ENCODE measurements at regions of chr10 and their contacts with region 1.

Region 1: DNA sequence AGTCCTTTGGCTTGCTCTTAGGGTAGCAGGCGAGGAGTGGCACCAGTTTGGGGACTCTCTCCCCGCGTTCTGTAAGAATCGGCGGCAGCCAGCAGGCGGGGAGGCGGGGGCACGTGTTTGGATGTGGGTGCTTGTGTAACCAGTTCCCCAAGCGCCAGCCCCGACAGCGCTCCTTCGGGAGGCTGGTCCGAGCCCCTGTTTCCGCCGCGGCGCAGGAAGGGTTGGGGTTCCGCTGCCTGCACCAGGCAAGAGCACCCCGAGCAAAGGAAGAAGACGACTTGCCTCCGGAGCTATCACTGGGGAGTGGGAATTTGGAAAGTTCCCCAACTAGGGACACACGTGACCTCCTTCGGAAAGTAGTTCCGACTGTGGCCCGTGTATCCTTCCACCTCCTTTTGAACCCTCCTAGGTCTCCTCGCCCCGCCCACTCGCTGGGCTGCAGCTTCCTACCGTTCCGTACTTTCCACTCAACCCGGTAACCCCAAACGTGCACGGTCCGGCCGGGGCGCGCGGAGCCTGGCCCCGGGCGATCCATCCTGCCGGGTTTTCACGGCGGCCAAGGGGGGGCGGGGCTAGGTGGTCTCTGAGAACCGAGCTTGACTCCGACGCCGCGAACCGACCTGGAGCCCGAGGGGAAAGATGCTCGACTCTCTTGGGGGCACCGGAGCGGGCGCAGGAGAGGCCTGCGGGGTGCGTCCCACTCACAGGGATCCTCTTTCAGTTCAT is 1.2 kb downstream of the KLLN start:
- DNase-seq: peak; percentile 93
- H3K4me3 Mint-ChIP-seq: peak overlapping the region; percentile 92
- H3K27ac Mint-ChIP-seq: peak overlapping the region; percentile 76
- H3K4me1 Mint-ChIP-seq: peaks cover 17% of the 10 kb centered on the region
- H3K27me3 Mint-ChIP-seq: no peaks in the 10 kb centered on the region
- CTCF ChIP-seq: no peak

Region 2: DNA sequence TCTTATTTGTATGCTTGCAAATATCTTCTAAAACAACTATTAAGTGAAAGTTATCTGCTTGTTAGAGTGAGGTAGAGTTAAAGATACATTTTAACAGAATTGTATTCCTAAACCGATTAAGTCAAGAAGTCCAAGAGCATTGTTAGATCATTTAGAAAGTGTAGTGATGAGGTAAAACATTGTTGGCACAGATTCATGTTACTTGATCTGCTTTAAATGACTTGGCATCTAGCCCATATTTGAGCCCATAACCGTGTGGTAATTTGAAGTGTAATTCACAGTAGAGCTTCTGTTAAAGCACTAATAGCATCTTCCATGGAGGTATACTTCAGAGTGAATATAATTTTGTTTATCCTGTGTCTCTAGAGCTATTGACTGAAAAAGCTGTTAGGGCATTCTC is 63.5 kb after region 1 on chr10:
- CTCF ChIA-PET with region 1: no interaction called
- intact Hi-C with region 1: loop called (anchors 5 kb)
- DNase-seq: peak; percentile 1
- H3K4me3 Mint-ChIP-seq: no peak overlapping the region
- H3K27ac Mint-ChIP-seq: no peak overlapping the region
- H3K4me1 Mint-ChIP-seq: peaks cover 17% of the 10 kb centered on the region
- H3K27me3 Mint-ChIP-seq: no peaks in the 10 kb centered on the region
- CTCF ChIP-seq: no peak

Region 3: DNA sequence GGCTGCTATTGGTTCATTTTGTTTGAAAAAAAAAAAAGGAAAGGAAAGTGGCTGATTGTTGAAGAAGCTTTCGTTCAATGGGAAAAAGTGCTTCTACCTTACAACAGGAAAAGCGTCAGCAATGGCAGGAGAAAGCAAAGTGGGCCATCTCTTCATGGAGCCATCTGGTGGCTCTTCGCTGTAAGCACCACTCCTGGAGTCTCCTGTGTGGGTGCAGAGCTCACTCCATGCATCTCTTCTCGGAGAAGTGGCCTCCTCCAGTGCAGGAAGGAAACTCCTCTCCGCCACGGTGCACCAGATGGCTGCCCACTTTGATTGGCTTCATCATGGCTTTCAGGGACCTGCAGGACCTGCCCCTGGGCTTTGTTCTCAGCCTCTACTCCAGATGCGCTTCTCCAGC is 252.3 kb after region 1 on chr10:
- CTCF ChIA-PET with region 1: interaction called, 6 read pairs
- intact Hi-C with region 1: loop called (anchors 5 kb)
- DNase-seq: peak; percentile 32
- H3K4me3 Mint-ChIP-seq: no peak overlapping the region
- H3K27ac Mint-ChIP-seq: no peak overlapping the region
- H3K4me1 Mint-ChIP-seq: peaks cover 16% of the 10 kb centered on the region
- H3K27me3 Mint-ChIP-seq: no peaks in the 10 kb centered on the region
- CTCF ChIP-seq: no peak

Region 4: DNA sequence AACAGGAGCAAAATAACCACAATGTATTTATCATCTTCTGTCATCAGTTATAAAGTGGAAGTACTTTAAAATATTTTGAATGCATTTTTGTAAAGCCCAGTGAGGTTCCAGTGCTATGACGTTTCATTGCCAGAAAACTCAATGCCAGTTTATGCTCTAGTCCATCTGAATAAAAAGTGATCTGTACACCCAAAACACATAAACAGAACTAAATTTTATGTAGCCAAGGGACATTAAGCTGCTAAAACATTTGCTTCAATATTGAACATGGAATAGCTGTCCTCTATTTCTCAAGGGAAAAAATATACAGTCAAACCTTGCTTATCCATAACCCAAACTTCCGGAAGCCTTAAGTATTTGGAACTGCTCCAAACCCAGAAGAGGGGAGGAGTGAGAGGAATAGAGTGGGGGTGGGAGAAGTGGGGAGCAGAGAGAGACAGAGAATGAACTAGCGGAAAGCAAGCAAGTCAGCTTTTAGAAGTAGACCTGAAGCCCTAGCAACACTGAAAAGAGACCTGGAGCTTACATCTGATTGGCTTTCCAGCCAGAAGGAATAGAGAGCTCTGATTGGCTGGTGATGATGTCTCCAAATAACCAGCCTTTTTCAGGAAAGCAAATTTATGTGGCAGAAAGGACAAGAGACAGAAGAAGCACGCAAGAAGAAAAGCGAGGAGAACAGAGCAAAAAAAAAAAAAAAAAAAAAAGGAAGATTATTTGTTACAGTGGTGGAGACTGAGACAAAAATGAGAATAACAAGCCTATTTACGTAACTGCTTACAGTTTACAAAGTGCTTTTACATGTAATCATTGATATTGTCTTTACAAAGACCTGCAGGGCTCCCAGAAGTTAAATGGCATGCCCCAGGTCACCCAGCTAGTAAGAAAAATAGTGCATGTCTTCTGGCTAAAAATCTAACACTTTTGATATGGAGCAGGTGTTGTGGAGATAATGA is 525.0 kb after region 1 on chr10:
- CTCF ChIA-PET with region 1: interaction called, 5 read pairs
- intact Hi-C with region 1: loop called (anchors 2 kb)
- DNase-seq: peak; percentile 21
- H3K4me3 Mint-ChIP-seq: peak overlapping the region; percentile 57
- H3K27ac Mint-ChIP-seq: peak overlapping the region; percentile 67
- H3K4me1 Mint-ChIP-seq: no peaks in the 10 kb centered on the region
- H3K27me3 Mint-ChIP-seq: no peaks in the 10 kb centered on the region
- CTCF ChIP-seq: no peak

Region 5: GRCh38 chr10:88553116-88553752 is 691.1 kb after region 1 on chr10:
- CTCF ChIA-PET with region 1: no interaction called
- intact Hi-C with region 1: loop called (anchors 5 kb)
- DNase-seq: peak; percentile 9
- H3K4me3 Mint-ChIP-seq: no peak overlapping the region
- H3K27ac Mint-ChIP-seq: no peak overlapping the region
- H3K4me1 Mint-ChIP-seq: peaks cover 8% of the 10 kb centered on the region
- H3K27me3 Mint-ChIP-seq: no peaks in the 10 kb centered on the region
- CTCF ChIP-seq: peak; percentile 39

Measured in Calu3 (cell line).